ENCODE measurements at regions of chr1 and their contacts with region 1.

Region 1: GRCh38 chr1:210448297-210448892 is 119.7 kb downstream of the HHAT start:
- DNase-seq: no peak
- H3K4me3 Mint-ChIP-seq: no peak overlapping the region
- H3K27ac Mint-ChIP-seq: no peak overlapping the region
- H3K4me1 Mint-ChIP-seq: peaks cover 21% of the 10 kb centered on the region
- H3K27me3 Mint-ChIP-seq: peaks cover 20% of the 10 kb centered on the region

Region 2: DNA sequence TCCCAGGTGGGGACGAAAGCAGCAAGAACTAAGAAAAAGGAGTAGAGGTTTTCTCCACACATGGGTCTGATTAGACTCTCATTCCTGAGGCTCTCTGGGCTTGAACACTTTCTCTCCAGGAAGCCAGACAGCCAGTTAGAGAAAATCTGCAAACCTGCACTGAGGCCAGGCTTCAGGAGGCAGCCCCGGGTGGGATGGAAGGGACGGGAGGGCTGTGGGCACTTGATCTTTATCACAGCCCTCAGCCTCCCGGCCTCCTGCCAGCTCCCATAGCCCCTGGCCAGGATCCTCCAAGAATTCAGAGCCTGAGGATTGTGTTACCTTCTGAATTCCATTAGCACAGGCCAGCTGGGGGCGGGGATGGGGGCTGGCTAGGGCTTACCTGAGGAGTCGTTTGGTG is 175.7 kb before region 1 on chr1:
- intact Hi-C with region 1: no loop called
- DNase-seq: no peak
- H3K4me3 Mint-ChIP-seq: no peak overlapping the region
- H3K27ac Mint-ChIP-seq: no peak overlapping the region
- H3K4me1 Mint-ChIP-seq: no peaks in the 10 kb centered on the region
- H3K27me3 Mint-ChIP-seq: peaks cover 4% of the 10 kb centered on the region

Region 3: GRCh38 chr1:210332719-210333398 is 115.5 kb before region 1 on chr1:
- intact Hi-C with region 1: loop called (anchors 1 kb)
- DNase-seq: peak; percentile 60
- H3K4me3 Mint-ChIP-seq: peak overlapping the region; percentile 8
- H3K27ac Mint-ChIP-seq: no peak overlapping the region
- H3K4me1 Mint-ChIP-seq: peaks cover 31% of the 10 kb centered on the region
- H3K27me3 Mint-ChIP-seq: peaks cover 25% of the 10 kb centered on the region

Region 4: GRCh38 chr1:210464519-210465039 is 16.2 kb after region 1 on chr1:
- intact Hi-C with region 1: loop called (anchors 1 kb)
- DNase-seq: peak; percentile 9
- H3K4me3 Mint-ChIP-seq: no peak overlapping the region
- H3K27ac Mint-ChIP-seq: no peak overlapping the region
- H3K4me1 Mint-ChIP-seq: peaks cover 17% of the 10 kb centered on the region
- H3K27me3 Mint-ChIP-seq: peaks cover 56% of the 10 kb centered on the region

Region 5: GRCh38 chr1:210696709-210697108 is 248.3 kb after region 1 on chr1:
- intact Hi-C with region 1: loop called (anchors 10 kb)
- DNase-seq: no peak
- H3K4me3 Mint-ChIP-seq: no peak overlapping the region
- H3K27ac Mint-ChIP-seq: no peak overlapping the region
- H3K4me1 Mint-ChIP-seq: peaks cover 21% of the 10 kb centered on the region
- H3K27me3 Mint-ChIP-seq: peaks cover 34% of the 10 kb centered on the region

Region 6: GRCh38 chr1:211133836-211134669 is 685.7 kb after region 1 on chr1 and contains the start of gene KCNH1:
- intact Hi-C with region 1: loop called (anchors 2 kb)
- DNase-seq: peak; percentile 65
- H3K4me3 Mint-ChIP-seq: peak within 1 kb of the TSS; percentile 35
- H3K27ac Mint-ChIP-seq: no peak within 1 kb of the TSS
- H3K4me1 Mint-ChIP-seq: peaks cover 5% of the 10 kb centered on the region
- H3K27me3 Mint-ChIP-seq: peaks cover 79% of the 10 kb centered on the region
- total RNA-seq, gene KCNH1: not detected in 2 replicates

Region 7: GRCh38 chr1:211514030-211514754 is 1065.8 kb after region 1 on chr1:
- intact Hi-C with region 1: loop called (anchors 10 kb)
- DNase-seq: peak; percentile 65
- H3K4me3 Mint-ChIP-seq: peak overlapping the region; percentile 65
- H3K27ac Mint-ChIP-seq: peak overlapping the region; percentile 44
- H3K4me1 Mint-ChIP-seq: peaks cover 30% of the 10 kb centered on the region
- H3K27me3 Mint-ChIP-seq: peaks cover 7% of the 10 kb centered on the region